HEK293 (cell line): ENCODE measurements at regions of chr5 and their contacts with region 1.

Region 1: DNA sequence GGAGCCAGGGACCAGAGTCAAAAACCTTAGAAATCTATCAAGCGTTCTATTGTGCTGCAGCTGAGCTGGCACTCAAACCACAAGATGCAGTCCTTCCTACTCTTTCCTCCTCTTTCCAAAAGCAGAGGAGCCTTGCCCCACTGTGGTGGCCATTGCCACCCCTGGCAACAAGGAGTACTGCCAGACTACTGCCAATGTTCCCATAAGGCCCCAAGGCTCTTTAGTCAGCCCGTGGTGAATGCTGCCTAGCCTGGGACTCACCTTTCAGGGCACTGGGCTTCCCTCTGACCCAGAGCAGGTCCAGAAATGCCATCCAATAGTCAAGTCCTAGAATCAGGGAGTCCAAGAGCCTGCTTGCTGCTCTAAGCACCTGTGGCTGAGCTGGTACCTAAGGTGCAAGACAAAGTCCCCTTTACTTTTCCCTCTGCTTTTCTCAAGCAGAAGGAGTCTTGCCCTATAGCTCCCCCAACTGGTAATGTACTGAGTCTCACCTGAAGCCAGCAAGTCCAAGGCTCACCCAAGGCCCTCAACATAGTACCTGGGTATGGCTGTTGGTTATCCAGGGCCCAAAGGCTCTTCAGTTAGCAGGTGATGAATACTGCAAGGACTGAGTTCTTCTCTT is 219.4 kb downstream of the ATPSCKMT start:
- H3K4me3 ChIP-seq: no peak overlapping the region
- H3K27ac ChIP-seq: no peak overlapping the region
- H3K4me1 ChIP-seq: no peaks in the 10 kb centered on the region
- CTCF ChIP-seq: no peak

Region 2: GRCh38 chr5:9898319-9898718 is 132.0 kb before region 1 on chr5:
- CTCF ChIA-PET with region 1: interaction called, 16 read pairs
- POLR2A ChIA-PET with region 1: no interaction called
- H3K4me3 ChIP-seq: no peak overlapping the region
- H3K27ac ChIP-seq: no peak overlapping the region
- H3K4me1 ChIP-seq: no peaks in the 10 kb centered on the region
- CTCF ChIP-seq: no peak

Region 3: GRCh38 chr5:10059556-10059955 is 29.2 kb after region 1 on chr5:
- CTCF ChIA-PET with region 1: interaction called, 10 read pairs
- POLR2A ChIA-PET with region 1: no interaction called
- H3K4me3 ChIP-seq: no peak overlapping the region
- H3K27ac ChIP-seq: no peak overlapping the region
- H3K4me1 ChIP-seq: no peaks in the 10 kb centered on the region
- CTCF ChIP-seq: no peak